ENCODE measurements at regions of chr9 and their contacts with region 1.

Region 1: DNA sequence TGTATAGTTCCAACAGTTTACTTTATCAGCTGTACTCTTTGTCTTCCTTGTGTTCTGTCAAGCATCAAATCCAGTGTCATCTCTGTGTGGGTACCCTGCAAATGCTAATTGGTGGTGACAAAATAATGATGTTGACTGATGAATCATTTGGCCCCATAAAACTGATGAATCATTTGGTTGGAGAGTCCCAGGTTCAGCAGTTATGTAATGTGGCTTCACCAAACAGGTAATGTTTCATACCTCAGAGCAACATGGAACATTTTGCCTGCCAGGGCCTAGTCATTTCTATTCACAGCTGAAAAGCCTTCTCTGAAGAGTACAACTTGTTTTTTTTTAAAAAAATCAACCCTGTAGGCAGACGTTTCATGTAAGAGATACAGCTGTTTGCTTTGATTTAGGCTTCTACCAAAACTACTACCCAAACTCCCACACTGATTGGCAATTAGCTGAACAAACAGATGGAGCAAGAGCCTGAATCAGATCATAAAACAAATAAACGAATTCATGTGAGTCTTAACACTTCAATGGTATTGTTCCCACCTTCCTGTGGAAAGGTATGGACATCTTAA is 23.6 kb upstream of the CTSV start:
- DNase-seq: peak; percentile 66
- H3K4me3 Mint-ChIP-seq: no peak overlapping the region
- H3K27ac Mint-ChIP-seq: peak overlapping the region; percentile 74
- H3K4me1 Mint-ChIP-seq: peaks cover 14% of the 10 kb centered on the region
- H3K27me3 Mint-ChIP-seq: peaks cover 13% of the 10 kb centered on the region

Region 2: DNA sequence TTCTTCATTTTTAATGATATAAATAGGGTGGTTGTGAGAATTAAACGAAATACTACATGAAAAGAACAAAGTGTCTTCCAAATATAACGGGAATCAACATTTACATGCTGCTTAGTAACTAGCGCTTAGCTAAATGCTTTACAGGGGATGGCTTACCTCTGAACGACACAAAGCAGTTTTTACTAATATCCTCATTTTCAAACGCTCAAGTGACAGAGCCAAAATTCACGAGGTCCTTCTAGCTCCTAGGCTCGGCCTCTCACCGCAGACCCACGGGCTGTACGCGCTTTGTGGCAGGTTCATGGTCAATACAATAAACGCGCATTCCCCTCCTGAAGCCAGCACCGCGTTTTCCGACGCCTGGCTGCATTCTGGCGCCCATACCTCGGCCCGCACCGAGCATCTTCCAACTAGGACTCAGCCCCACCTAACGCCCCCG is 285.1 kb before region 1 on chr9:
- CTCF ChIA-PET with region 1: no interaction called
- POLR2A ChIA-PET with region 1: no interaction called
- intact Hi-C with region 1: loop called (anchors 5 kb)
- DNase-seq: no peak
- H3K4me3 Mint-ChIP-seq: peak overlapping the region; percentile 100
- H3K27ac Mint-ChIP-seq: peak overlapping the region; percentile 88
- H3K4me1 Mint-ChIP-seq: peaks cover 28% of the 10 kb centered on the region
- H3K27me3 Mint-ChIP-seq: no peaks in the 10 kb centered on the region

Region 3: GRCh38 chr9:96875461-96876364 is 186.8 kb before region 1 on chr9:
- CTCF ChIA-PET with region 1: no interaction called
- POLR2A ChIA-PET with region 1: no interaction called
- intact Hi-C with region 1: no loop called
- DNase-seq: peak; percentile 62
- H3K4me3 Mint-ChIP-seq: peak overlapping the region; percentile 77
- H3K27ac Mint-ChIP-seq: peak overlapping the region; percentile 82
- H3K4me1 Mint-ChIP-seq: peaks cover 27% of the 10 kb centered on the region
- H3K27me3 Mint-ChIP-seq: peaks cover 33% of the 10 kb centered on the region